ENCODE measurements at regions of chr3 and their contacts with region 1.

Region 1: DNA sequence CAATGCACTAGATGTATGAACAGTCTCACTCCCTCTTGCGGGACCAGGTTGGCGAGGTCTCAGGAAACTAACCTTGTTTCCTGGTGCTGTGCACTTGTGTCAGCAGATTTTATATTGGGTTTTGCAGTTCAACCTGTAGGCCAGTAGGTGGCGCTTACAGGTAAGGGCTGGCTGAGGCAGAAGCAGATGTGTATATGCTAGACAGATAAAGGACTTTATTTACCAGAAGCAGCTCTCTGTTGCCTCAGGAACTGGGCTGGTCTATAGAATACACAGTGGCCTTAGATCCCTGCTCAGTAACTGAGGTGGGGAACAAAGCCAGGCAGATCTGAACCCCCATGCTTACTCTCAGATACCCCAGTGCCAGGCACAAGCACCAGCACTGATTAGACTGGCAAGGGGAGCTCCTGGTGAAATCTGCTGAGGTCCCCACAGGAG is 296.8 kb downstream of the DOCK3 start:
- DNase-seq: peak; percentile 73
- H3K4me3 Mint-ChIP-seq: no peak overlapping the region
- H3K27ac Mint-ChIP-seq: no peak overlapping the region
- H3K4me1 Mint-ChIP-seq: peaks cover 16% of the 10 kb centered on the region
- H3K27me3 Mint-ChIP-seq: no peaks in the 10 kb centered on the region

Region 2: DNA sequence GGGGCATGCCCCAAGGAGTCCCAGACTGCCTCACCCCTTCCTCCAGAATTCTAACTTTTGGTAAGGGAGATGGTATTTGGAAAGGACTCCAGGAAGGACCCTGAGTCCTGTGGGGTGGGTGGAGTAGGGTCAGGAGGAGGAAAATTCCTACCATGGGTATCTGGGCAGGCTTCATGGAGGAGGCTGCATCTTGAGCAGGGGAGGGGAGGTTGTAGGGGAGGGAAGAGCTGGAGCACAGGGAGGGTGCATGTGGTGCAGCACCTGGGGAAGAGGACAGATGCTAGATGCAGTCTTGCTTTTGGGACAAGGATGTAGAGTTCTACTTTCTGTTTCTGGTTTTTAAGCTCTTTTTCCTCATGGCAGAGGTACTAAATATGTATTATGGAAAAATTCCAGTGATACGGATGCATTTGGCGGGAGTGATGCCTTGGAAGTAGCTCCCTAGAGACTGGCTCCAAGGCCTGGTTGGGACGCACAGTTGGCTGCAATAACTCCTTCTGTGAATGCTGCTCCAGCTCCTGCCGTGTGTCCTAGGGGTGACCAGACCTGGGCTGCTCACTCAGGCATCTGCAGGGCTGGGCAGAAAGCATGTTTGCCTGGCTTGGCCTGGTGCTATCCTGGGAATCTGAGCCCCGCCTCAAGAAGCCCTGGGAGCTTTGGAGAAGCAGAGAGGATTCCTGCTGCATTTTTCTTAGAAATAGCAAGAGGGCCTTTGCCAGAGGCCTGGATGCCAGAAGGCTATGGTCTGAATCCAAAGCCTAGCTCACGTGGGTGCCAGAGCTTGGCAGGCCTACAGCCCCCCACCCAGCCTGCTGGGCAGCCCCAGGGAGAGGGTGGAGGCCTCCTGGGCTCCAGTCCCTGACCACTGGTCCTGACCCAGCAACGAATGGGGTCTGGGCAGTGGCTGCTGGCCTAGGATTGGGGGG is 806.3 kb before region 1 on chr3:
- CTCF ChIA-PET with region 1: no interaction called
- intact Hi-C with region 1: no loop called
- DNase-seq: no peak
- H3K4me3 Mint-ChIP-seq: no peak overlapping the region
- H3K27ac Mint-ChIP-seq: no peak overlapping the region
- H3K4me1 Mint-ChIP-seq: no peaks in the 10 kb centered on the region
- H3K27me3 Mint-ChIP-seq: no peaks in the 10 kb centered on the region

Region 3: DNA sequence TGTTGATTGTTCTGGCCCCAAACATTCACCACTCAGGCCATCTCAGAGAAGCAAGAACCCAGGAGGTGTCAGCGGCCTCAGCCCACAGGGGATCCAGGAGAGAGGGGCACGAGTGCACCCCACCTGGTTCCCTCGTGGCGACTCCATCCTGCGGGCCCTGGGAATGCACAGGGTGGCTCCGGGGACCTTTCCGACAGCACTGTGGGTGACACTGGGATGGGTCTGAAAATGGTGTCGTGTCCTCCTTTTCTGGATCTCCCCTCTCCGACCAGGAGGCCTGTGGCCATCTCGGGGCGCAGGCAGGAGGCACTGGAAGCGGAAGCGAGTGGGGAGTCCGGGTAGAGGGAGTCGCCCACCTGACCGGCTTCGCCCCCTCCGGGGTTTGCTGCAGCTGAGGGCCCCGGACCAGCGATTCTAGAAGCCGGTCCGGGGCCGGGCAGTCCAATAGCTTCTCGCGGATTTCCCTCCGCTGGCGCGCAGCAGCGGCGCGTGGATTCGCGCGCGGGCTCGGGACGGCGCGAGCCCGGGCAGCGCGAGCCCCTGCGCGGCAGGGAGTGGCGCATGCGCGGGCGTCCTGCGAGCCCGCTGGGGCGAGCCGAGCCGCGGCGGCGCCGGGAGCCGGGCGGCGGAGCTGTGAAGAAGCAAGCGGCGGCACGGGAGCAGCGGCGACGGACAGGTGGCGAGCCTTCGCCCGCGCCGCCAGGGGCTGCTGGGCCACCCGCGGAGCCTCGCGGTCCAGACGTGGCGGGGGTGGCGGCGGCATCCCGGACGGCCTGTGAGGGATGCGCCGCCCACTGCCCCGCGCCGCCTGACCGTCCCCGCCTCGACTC is 296.9 kb before region 1 on chr3 and contains the start of gene DOCK3:
- CTCF ChIA-PET with region 1: interaction called, 4 read pairs
- intact Hi-C with region 1: loop called (anchors 1 kb)
- DNase-seq: peak; percentile 57
- H3K4me3 Mint-ChIP-seq: peak within 1 kb of the TSS; percentile 64
- H3K27ac Mint-ChIP-seq: peak within 1 kb of the TSS; percentile 9
- H3K4me1 Mint-ChIP-seq: peaks cover 7% of the 10 kb centered on the region
- H3K27me3 Mint-ChIP-seq: peaks cover 37% of the 10 kb centered on the region
- total RNA-seq, gene DOCK3: 1.6 to 1.7 TPM

Region 4: DNA sequence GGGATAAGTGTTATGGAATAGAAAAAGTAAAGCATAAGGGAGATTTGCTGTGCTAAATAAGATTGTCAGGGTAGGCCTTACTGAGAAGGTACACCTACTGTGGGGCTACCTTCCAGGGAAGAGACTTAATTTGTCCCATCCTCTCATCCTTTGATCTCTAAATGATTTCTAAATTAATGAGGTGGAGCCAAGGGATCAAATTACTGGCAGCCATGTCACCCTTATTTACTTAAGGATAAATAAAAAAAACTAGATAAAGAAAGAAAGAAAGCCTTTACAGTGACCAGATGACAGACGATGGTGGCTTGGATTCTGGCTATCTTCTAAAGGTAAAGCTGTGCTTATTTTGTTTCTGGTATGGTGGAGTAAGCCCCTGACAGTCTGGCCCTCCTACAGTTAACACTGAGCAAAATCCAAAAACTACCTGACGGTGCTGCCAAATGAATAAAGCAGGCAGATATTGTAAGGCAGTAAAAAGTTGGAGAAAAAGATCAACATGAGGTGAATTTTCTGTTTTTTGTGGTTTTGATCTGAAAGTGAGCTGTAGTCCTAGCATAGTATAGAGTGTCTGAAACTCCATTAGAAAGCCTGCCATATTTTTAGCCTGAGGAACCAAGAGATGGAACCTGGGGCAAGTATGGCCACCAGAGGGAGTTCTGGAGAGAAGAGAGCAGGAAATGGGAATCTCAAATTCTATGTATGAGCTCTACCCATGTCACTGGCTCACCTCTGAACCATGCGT is 128.5 kb after region 1 on chr3:
- CTCF ChIA-PET with region 1: interaction called, 4 read pairs
- intact Hi-C with region 1: loop called (anchors 10 kb)
- DNase-seq: peak; percentile 49
- H3K4me3 Mint-ChIP-seq: no peak overlapping the region
- H3K27ac Mint-ChIP-seq: no peak overlapping the region
- H3K4me1 Mint-ChIP-seq: peaks cover 9% of the 10 kb centered on the region
- H3K27me3 Mint-ChIP-seq: no peaks in the 10 kb centered on the region

Region 5: DNA sequence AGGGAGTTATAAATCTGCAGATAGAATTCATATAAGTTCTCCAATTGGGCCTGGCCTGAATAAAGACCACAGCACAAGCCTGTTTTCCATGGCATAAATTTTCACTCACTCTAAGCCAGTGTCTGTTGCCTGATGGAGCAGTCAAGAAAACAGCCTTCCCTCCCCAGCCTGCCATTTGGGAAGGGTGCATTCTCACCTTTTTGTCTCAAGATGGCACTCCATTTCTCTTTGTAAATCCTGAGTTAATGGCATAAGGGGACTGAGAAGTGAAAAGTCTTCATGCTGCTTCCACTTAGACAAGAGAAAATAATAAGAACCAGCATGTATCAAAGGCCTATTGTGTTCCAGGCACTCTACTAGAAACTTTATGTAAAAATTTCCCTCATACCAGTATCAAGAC is 298.0 kb after region 1 on chr3:
- CTCF ChIA-PET with region 1: no interaction called
- intact Hi-C with region 1: loop called (anchors 2 kb)
- DNase-seq: no peak
- H3K4me3 Mint-ChIP-seq: no peak overlapping the region
- H3K27ac Mint-ChIP-seq: no peak overlapping the region
- H3K4me1 Mint-ChIP-seq: peaks cover 25% of the 10 kb centered on the region
- H3K27me3 Mint-ChIP-seq: no peaks in the 10 kb centered on the region

Region 6: DNA sequence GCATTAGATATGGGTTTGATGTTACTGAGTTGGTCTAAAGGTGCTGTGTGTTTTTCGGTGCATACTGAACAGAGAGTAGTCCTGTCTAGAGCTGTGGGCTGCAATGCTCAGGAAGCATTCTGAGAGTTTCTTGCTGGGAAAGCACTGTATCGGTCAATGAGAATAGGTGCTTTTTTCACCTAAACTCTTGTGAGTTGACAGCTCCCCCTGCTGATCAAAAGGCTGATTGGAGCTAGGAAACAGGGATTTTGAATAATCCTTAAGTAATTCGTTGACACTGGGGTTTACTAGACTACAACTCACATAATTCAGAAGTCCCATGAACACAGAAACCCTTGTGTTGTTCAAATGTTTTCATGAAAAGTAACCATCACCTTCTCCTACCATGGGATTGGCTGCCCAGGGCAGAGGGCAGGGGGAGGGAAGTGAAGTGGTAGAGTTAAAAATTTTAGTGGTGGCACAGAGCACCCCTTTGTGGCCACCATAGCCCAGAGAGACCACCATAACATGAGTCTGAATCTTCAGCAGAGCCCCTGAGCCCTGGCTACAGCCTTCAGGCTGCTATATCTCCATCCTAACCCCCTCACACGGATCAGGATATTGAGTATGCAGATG is 400.5 kb after region 1 on chr3:
- CTCF ChIA-PET with region 1: interaction called, 28 read pairs
- intact Hi-C with region 1: loop called (anchors 1 kb)
- DNase-seq: peak; percentile 78
- H3K4me3 Mint-ChIP-seq: no peak overlapping the region
- H3K27ac Mint-ChIP-seq: no peak overlapping the region
- H3K4me1 Mint-ChIP-seq: peaks cover 2% of the 10 kb centered on the region
- H3K27me3 Mint-ChIP-seq: no peaks in the 10 kb centered on the region

Region 7: DNA sequence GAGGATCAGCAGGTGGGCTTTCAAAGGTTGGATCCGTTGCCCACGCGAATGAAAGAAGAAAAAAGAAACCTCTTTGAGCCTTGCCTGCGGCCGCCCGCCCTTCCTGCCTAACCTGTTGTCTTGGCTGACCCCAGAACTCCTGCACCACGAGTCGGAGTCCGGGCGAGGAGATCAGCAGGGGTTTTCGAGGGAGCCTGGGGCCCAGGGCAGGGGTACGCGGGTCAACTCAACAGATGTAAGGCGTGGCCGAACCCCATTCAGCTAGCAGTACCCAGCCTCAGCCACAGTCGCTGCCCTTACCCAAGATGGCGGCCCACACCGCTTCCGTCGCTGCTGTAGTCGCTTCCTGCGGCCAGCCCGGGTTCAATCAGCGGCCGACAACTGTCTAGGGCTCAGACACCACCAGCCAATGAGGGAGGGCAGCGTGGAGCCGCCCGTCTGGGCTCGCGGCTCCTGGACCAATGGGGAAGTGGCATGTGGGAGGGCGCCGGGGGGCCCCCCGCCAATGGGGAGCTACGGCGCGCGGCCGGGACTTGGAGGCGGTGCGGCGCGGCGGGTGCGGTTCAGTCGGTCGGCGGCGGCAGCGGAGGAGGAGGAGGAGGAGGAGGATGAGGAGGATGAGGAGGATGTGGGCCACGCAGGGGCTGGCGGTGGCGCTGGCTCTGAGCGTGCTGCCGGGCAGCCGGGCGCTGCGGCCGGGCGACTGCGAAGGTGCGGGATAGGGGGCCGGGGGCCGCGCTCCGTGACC is 413.4 kb after region 1 on chr3 and contains the start of gene MANF:
- CTCF ChIA-PET with region 1: interaction called, 6 read pairs
- intact Hi-C with region 1: loop called (anchors 5 kb)
- DNase-seq: peak; percentile 99
- H3K4me3 Mint-ChIP-seq: peak within 1 kb of the TSS; percentile 97
- H3K27ac Mint-ChIP-seq: peak within 1 kb of the TSS; percentile 98
- H3K4me1 Mint-ChIP-seq: peaks cover 47% of the 10 kb centered on the region
- H3K27me3 Mint-ChIP-seq: no peaks in the 10 kb centered on the region
- total RNA-seq, gene MANF: 91.7 to 108 TPM

Measured in activated naive CD4-positive, alpha-beta T cell treated with anti-CD3 and anti-CD28 coated beads for 36 hours (primary cell).